Dendritic cell treated with granulocyte-macrophage colony-stimulating factor and Interleukin-4, amounts not matched to agents 40 ng/mL and 50 ng/mL, for 4 days (primary cell): ENCODE measurements at regions of chr4 and their contacts with region 1.

Region 1: GRCh38 chr4:153344131-153345010 is at the start of gene MND1:
- H3K4me3 Mint-ChIP-seq: peak within 1 kb of the TSS; percentile 79
- H3K27ac Mint-ChIP-seq: no peak within 1 kb of the TSS
- H3K4me1 Mint-ChIP-seq: peaks cover 14% of the 10 kb centered on the region
- H3K27me3 Mint-ChIP-seq: peaks cover 38% of the 10 kb centered on the region

Region 2: DNA sequence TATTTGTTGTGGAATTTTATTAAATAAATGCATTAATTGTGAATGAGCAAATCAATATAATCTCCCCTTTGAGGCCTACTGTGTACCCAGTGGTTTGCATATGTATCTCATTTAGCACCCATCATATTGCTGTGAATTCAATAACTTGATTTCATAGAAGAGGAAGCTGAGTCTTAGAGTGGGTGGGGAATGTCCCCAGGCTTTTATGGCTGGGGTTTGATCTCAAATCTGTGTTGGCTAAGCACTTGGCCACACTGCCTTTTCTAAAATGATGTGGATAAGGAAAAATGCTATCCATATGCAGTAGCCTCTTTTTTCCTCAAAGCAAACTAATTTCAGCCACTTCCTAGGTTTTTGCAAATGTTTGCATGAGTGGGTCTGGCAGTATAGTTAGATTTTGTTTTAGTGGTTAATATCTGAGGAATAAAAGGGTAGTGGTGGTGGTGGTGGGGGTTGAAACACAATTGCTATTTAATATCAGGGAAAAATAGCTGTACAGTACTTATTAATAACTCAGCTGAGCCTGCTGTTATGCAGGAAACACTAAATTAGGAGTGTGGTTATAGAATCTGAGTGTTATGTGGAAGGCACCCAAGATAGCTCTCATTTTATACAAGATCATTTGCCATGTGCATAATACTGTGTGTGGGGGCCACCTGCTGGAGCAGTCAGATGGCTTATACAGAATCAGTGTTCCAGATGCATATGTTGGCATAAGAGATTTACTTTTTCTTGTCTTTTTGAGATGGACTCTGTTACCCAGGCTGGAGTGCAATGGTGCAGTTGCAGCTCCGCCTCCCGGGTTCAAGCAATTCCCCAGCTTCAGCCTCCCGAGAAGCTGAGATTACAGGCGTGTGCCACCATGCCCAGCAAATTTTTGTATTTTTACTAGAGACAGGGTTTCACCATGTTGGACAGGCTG is 229.8 kb after region 1 on chr4:
- intact Hi-C with region 1: loop called (anchors 2 kb)
- H3K4me3 Mint-ChIP-seq: no peak overlapping the region
- H3K27ac Mint-ChIP-seq: no peak overlapping the region
- H3K4me1 Mint-ChIP-seq: peaks cover 9% of the 10 kb centered on the region
- H3K27me3 Mint-ChIP-seq: peaks cover 8% of the 10 kb centered on the region

Region 3: GRCh38 chr4:153611679-153612078 is 267.3 kb after region 1 on chr4:
- intact Hi-C with region 1: no loop called
- H3K4me3 Mint-ChIP-seq: no peak overlapping the region
- H3K27ac Mint-ChIP-seq: peak overlapping the region; percentile 25
- H3K4me1 Mint-ChIP-seq: peaks cover 6% of the 10 kb centered on the region
- H3K27me3 Mint-ChIP-seq: no peaks in the 10 kb centered on the region

Region 4: DNA sequence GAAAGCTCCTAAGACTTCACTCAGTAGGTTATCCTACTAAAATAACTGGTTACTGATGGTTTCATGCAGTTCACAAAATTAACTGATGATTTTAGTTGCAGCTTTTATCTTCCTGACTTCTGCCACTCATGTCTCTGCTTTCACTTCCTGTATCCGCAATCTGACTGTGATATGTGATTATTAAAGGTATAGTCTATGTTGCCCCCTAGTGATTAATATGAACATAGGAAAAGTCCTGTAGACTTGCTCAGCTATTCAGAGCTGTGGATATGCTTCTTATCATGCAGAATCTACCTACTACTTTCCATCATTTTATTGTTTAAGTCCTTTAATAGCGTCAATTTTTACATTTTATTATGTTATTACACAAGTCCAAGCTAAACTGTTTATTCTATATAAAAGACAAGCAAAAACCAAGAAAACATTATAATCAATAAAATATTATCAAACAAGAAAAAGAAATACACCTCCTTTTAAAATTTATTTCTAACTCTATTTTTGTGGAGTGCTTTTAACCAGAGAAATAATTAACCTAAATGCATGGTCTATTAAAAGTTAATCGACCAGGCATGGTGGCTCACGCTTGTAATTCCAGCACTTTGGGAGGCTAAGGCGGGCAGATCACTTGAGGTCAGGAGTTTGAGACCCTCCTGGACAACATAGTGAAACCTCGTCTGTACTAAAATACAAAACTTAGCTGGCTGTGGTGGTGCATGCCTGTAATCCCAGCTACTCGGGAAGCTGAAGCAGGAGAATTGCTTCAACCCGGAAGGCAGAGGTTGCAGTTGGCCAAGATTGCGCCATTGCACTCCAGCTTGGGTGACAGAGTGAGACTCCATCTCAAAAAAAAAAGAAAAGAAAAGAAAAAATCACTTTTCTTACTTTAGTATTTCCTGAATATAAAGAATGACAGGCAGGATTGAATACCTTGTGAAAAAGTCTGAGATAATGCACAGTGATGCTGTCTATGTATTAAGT is 299.3 kb after region 1 on chr4:
- intact Hi-C with region 1: loop called (anchors 10 kb)
- H3K4me3 Mint-ChIP-seq: no peak overlapping the region
- H3K27ac Mint-ChIP-seq: no peak overlapping the region
- H3K4me1 Mint-ChIP-seq: peaks cover 34% of the 10 kb centered on the region
- H3K27me3 Mint-ChIP-seq: no peaks in the 10 kb centered on the region

Region 5: GRCh38 chr4:153750197-153750817 is 405.9 kb after region 1 on chr4:
- intact Hi-C with region 1: loop called (anchors 2 kb)
- H3K4me3 Mint-ChIP-seq: no peak overlapping the region
- H3K27ac Mint-ChIP-seq: no peak overlapping the region
- H3K4me1 Mint-ChIP-seq: peaks cover 35% of the 10 kb centered on the region
- H3K27me3 Mint-ChIP-seq: no peaks in the 10 kb centered on the region